ENCODE measurements at regions of chr3 and their contacts with region 1.

Region 1: GRCh38 chr3:32947789-32948238 is 3.6 kb upstream of the CCR4 start:
- DNase-seq: peak; percentile 82 to 89 (median 85)
- H3K4me3 ChIP-seq: no peak overlapping the region
- H3K4me3 Mint-ChIP-seq: peak overlapping the region in 2 of 8 donors; percentile 7 to 52
- H3K27ac ChIP-seq: no peak overlapping the region
- H3K27ac Mint-ChIP-seq: peak overlapping the region in 6 of 7 donors; percentile 5 to 91 (median 62)
- H3K4me1 ChIP-seq: peaks cover 42% of the 10 kb centered on the region
- H3K4me1 Mint-ChIP-seq: peaks cover 20 to 52% (median 37%) of the 10 kb centered on the region in 4 donors
- H3K27me3 ChIP-seq: no peaks in the 10 kb centered on the region
- H3K27me3 Mint-ChIP-seq: no peaks in the 10 kb centered on the region

Region 2: DNA sequence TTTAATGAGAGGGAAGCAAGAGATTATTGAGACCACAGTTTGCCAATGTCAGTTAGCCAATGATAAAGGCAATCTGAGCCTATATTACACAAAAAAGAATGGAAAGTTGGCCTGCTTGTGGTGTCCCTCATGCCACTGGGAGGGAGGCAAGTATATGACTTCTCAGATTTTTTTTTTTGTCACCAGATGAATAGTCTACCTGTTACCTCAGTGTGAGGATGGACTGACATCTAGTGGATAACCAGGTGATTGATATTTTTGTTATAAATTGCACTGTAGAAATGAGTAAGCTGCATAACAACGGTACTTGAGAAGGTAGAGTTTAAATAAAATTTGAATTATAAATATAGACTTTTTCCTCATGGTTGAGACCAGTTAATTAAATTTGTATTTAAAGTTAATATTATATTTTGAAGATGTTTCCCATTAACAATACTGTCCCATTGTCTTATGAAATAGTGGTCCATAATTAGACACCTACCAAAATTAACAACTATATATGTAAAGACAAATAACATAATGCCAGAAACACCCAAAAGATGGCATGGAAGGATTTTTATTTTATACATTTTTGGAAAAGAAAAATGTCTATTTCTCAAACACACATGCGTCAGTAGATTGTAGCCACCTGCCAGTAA is 1815.6 kb before region 1 on chr3:
- CTCF ChIA-PET with region 1: no interaction called
- POLR2A ChIA-PET with region 1: no interaction called
- intact Hi-C with region 1: no loop called
- DNase-seq: peak in 4 of 5 donors; percentile 37 to 47 (median 44)
- H3K4me3 ChIP-seq: no peak overlapping the region
- H3K4me3 Mint-ChIP-seq: no peak overlapping the region
- H3K27ac ChIP-seq: no peak overlapping the region
- H3K27ac Mint-ChIP-seq: no peak overlapping the region
- H3K4me1 ChIP-seq: no peaks in the 10 kb centered on the region
- H3K4me1 Mint-ChIP-seq: peaks cover 0 to 6% (median 1%) of the 10 kb centered on the region in 4 donors
- H3K27me3 ChIP-seq: no peaks in the 10 kb centered on the region
- H3K27me3 Mint-ChIP-seq: no peaks in the 10 kb centered on the region

Region 3: DNA sequence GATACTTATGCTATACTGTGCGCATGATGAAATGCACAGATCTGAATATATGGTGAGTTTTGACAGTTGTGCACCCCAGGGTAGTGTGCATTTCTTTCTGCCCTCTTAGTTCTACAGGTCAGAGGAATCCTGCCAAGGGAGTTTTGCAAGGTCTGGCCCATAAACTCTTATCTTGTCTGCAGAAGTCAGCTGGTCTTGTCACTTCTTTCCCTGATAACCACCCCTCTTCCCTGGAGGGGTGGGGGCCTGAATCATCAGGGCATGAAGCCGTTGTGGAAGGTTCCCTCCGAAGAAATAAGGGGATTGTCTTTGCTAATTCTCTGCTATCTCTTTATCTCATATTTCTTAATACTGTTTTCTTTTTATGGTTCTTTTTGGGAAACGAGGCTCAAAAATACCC is 99.6 kb before region 1 on chr3:
- CTCF ChIA-PET with region 1: no interaction called
- POLR2A ChIA-PET with region 1: no interaction called
- intact Hi-C with region 1: no loop called
- DNase-seq: no peak
- H3K4me3 ChIP-seq: no peak overlapping the region
- H3K4me3 Mint-ChIP-seq: no peak overlapping the region
- H3K27ac ChIP-seq: no peak overlapping the region
- H3K27ac Mint-ChIP-seq: no peak overlapping the region
- H3K4me1 ChIP-seq: no peaks in the 10 kb centered on the region
- H3K4me1 Mint-ChIP-seq: no peaks in the 10 kb centered on the region
- H3K27me3 ChIP-seq: no peaks in the 10 kb centered on the region
- H3K27me3 Mint-ChIP-seq: no peaks in the 10 kb centered on the region

Region 4: GRCh38 chr3:32872487-32873382 is 75.1 kb before region 1 on chr3:
- CTCF ChIA-PET with region 1: no interaction called
- POLR2A ChIA-PET with region 1: no interaction called
- intact Hi-C with region 1: no loop called
- DNase-seq: no peak
- H3K4me3 ChIP-seq: no peak overlapping the region
- H3K4me3 Mint-ChIP-seq: no peak overlapping the region
- H3K27ac ChIP-seq: no peak overlapping the region
- H3K27ac Mint-ChIP-seq: no peak overlapping the region
- H3K4me1 ChIP-seq: no peaks in the 10 kb centered on the region
- H3K4me1 Mint-ChIP-seq: peaks cover 0 to 1% (median 0%) of the 10 kb centered on the region in 4 donors
- H3K27me3 ChIP-seq: no peaks in the 10 kb centered on the region
- H3K27me3 Mint-ChIP-seq: peaks cover 5% of the 10 kb centered on the region in 2 donors

Region 5: GRCh38 chr3:32973982-32974381 is 26.2 kb after region 1 on chr3:
- CTCF ChIA-PET with region 1: interaction called, 8 read pairs
- POLR2A ChIA-PET with region 1: interaction called, 8 read pairs
- intact Hi-C with region 1: loop called (anchors 1 kb)
- DNase-seq: peak; percentile 54 to 72 (median 62)
- H3K4me3 ChIP-seq: no peak overlapping the region
- H3K4me3 Mint-ChIP-seq: peak overlapping the region in 7 of 8 donors; percentile 47 to 85 (median 72)
- H3K27ac ChIP-seq: peak overlapping the region; percentile 14
- H3K27ac Mint-ChIP-seq: peak overlapping the region; percentile 62 to 93 (median 87)
- H3K4me1 ChIP-seq: peaks cover 48% of the 10 kb centered on the region
- H3K4me1 Mint-ChIP-seq: peaks cover 40 to 66% (median 46%) of the 10 kb centered on the region in 4 donors
- H3K27me3 ChIP-seq: no peaks in the 10 kb centered on the region
- H3K27me3 Mint-ChIP-seq: no peaks in the 10 kb centered on the region

Region 6: DNA sequence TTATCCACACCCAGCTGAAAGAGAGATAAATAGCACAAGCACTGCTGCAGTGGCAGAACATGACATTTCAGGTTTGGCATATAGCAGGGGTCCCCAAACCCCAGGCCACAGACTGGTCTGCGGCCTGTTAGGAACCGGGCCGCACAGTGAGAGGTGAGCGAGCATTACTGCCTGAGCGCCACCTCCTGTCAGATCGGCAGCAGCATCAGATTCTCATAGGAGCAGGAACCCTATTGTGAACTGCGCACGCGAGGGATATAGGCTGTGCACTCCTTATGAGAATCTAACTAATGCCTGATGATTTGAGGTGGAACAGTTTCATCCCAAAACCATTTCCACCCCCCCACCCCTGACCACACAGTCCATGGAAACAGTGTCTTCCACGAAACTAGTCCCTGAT is 58.3 kb after region 1 on chr3:
- CTCF ChIA-PET with region 1: interaction called, 17 read pairs
- POLR2A ChIA-PET with region 1: interaction called, 47 read pairs
- intact Hi-C with region 1: loop called (anchors 1 kb)
- DNase-seq: peak; percentile 27 to 61 (median 51)
- H3K4me3 ChIP-seq: no peak overlapping the region
- H3K4me3 Mint-ChIP-seq: peak overlapping the region in 7 of 8 donors; percentile 20 to 62 (median 40)
- H3K27ac ChIP-seq: peak overlapping the region; percentile 0
- H3K27ac Mint-ChIP-seq: peak overlapping the region; percentile 73 to 94 (median 86)
- H3K4me1 ChIP-seq: peaks cover 78% of the 10 kb centered on the region
- H3K4me1 Mint-ChIP-seq: peaks cover 41 to 81% (median 66%) of the 10 kb centered on the region in 4 donors
- H3K27me3 ChIP-seq: no peaks in the 10 kb centered on the region
- H3K27me3 Mint-ChIP-seq: no peaks in the 10 kb centered on the region

Region 7: GRCh38 chr3:33030802-33031201 is 83.0 kb after region 1 on chr3:
- CTCF ChIA-PET with region 1: interaction called, 93 read pairs
- POLR2A ChIA-PET with region 1: interaction called, 12 read pairs
- intact Hi-C with region 1: loop called (anchors 1 kb)
- DNase-seq: peak; percentile 58 to 77 (median 72)
- H3K4me3 ChIP-seq: no peak overlapping the region
- H3K4me3 Mint-ChIP-seq: peak overlapping the region in 7 of 8 donors; percentile 32 to 73 (median 54)
- H3K27ac ChIP-seq: no peak overlapping the region
- H3K27ac Mint-ChIP-seq: peak overlapping the region; percentile 52 to 94 (median 83)
- H3K4me1 ChIP-seq: peaks cover 29% of the 10 kb centered on the region
- H3K4me1 Mint-ChIP-seq: peaks cover 24 to 49% (median 31%) of the 10 kb centered on the region in 4 donors
- H3K27me3 ChIP-seq: no peaks in the 10 kb centered on the region
- H3K27me3 Mint-ChIP-seq: no peaks in the 10 kb centered on the region

Region 8: GRCh38 chr3:33131331-33132018 is 183.7 kb after region 1 on chr3:
- CTCF ChIA-PET with region 1: interaction called, 45 read pairs
- POLR2A ChIA-PET with region 1: interaction called, 4 read pairs
- intact Hi-C with region 1: loop called (anchors 1 kb)
- DNase-seq: peak in 4 of 5 donors; percentile 31 to 40 (median 35)
- H3K4me3 ChIP-seq: no peak overlapping the region
- H3K4me3 Mint-ChIP-seq: no peak overlapping the region
- H3K27ac ChIP-seq: no peak overlapping the region
- H3K27ac Mint-ChIP-seq: no peak overlapping the region
- H3K4me1 ChIP-seq: no peaks in the 10 kb centered on the region
- H3K4me1 Mint-ChIP-seq: peaks cover 0 to 8% (median 5%) of the 10 kb centered on the region in 4 donors
- H3K27me3 ChIP-seq: no peaks in the 10 kb centered on the region
- H3K27me3 Mint-ChIP-seq: no peaks in the 10 kb centered on the region

Region 9: DNA sequence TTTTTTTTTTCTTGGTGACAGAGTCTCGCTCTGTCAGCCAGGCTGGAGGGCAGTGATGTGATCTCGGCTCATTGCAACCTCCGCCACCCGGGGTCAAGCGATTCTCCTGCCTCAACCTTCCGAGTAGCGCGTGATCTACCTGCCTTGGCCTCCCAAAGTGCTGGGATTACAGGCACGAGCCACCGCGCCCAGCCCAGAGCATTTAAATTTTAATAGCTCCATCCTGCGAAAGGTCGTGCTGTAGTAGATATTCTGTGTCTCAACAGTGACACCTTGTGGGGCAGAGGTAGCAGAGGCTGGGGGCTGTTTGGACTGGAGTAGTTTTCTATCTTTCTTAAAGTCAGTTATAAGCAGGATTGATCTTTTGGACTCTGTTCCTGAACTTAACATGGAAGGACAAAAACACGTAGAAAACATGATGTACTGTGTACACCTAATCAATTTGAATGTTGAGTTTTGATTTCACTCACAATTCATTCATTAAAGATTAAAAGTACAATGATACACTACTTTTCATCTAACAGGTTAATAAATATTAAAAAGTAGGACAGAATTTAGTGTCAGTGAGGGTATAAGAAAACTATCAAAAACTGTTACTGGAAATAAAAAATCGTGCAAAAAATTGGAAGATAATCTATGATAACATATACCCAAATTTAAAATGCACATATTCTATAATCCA is 839.7 kb after region 1 on chr3:
- CTCF ChIA-PET with region 1: interaction called, 3 read pairs
- POLR2A ChIA-PET with region 1: no interaction called
- intact Hi-C with region 1: loop called (anchors 1 kb)
- DNase-seq: peak; percentile 52 to 65 (median 59)
- H3K4me3 ChIP-seq: no peak overlapping the region
- H3K4me3 Mint-ChIP-seq: peak overlapping the region in 4 of 8 donors; percentile 23 to 70 (median 30)
- H3K27ac ChIP-seq: no peak overlapping the region
- H3K27ac Mint-ChIP-seq: peak overlapping the region in 2 of 7 donors; percentile 21 to 37
- H3K4me1 ChIP-seq: peaks cover 4% of the 10 kb centered on the region
- H3K4me1 Mint-ChIP-seq: peaks cover 0 to 4% (median 2%) of the 10 kb centered on the region in 4 donors
- H3K27me3 ChIP-seq: no peaks in the 10 kb centered on the region
- H3K27me3 Mint-ChIP-seq: peaks cover 6 to 11% of the 10 kb centered on the region in 2 donors

Region 10: GRCh38 chr3:34159613-34160420 is 1212.0 kb after region 1 on chr3:
- CTCF ChIA-PET with region 1: no interaction called
- POLR2A ChIA-PET with region 1: no interaction called
- intact Hi-C with region 1: no loop called
- DNase-seq: no peak
- H3K4me3 ChIP-seq: no peak overlapping the region
- H3K4me3 Mint-ChIP-seq: no peak overlapping the region
- H3K27ac ChIP-seq: no peak overlapping the region
- H3K27ac Mint-ChIP-seq: peak overlapping the region in 1 of 7 donors; percentile 41
- H3K4me1 ChIP-seq: no peaks in the 10 kb centered on the region
- H3K4me1 Mint-ChIP-seq: no peaks in the 10 kb centered on the region
- H3K27me3 ChIP-seq: no peaks in the 10 kb centered on the region
- H3K27me3 Mint-ChIP-seq: no peaks in the 10 kb centered on the region

Measured in CD4-positive, alpha-beta memory T cell (primary cell).